ENCODE measurements at regions of chr1 and their contacts with region 1.

Region 1: GRCh38 chr1:56525489-56526041 is 53.8 kb downstream of the PLPP3 start:
- DNase-seq: peak; percentile 91 to 97 (median 94)
- H3K4me3 ChIP-seq: no peak overlapping the region
- H3K4me3 Mint-ChIP-seq: peak overlapping the region in 1 of 2 donors; percentile 48
- H3K27ac ChIP-seq: peak overlapping the region in 1 of 2 donors; percentile 26
- H3K27ac Mint-ChIP-seq: peak overlapping the region; percentile 72 to 93 (median 80)
- H3K4me1 ChIP-seq: peaks cover 21 to 32% of the 10 kb centered on the region in 2 donors
- H3K4me1 Mint-ChIP-seq: peaks cover 41% of the 10 kb centered on the region
- H3K27me3 ChIP-seq: peaks cover 76 to 84% of the 10 kb centered on the region in 2 donors
- H3K27me3 Mint-ChIP-seq: peaks cover 32 to 59% (median 34%) of the 10 kb centered on the region in 3 donors
- CTCF ChIP-seq: no peak

Region 2: DNA sequence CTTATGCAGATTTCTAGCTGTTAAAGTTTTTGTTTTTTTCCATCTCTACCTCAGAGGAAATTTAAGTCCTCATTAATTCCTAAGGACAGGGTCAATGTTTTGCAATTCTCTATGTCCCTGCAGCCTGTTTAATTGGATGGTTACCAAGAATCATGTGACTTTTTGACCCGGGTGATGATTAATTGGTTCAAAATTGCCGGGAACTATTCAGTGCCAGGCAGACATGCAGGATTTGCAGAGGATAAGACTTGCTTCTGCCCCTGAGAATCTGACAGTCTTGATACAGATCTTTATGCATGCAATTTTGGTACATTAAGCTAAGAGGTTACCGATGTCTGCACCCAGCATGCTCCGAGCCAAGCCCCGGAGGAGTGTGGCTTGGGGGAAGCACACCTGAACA is 34.1 kb before region 1 on chr1:
- intact Hi-C with region 1: loop called in 1 of 2 experiments (anchors 5 kb)
- DNase-seq: no peak
- H3K4me3 ChIP-seq: no peak overlapping the region
- H3K4me3 Mint-ChIP-seq: no peak overlapping the region
- H3K27ac ChIP-seq: no peak overlapping the region
- H3K27ac Mint-ChIP-seq: no peak overlapping the region
- H3K4me1 ChIP-seq: peaks cover 13 to 14% of the 10 kb centered on the region in 2 donors
- H3K4me1 Mint-ChIP-seq: peaks cover 14% of the 10 kb centered on the region
- H3K27me3 ChIP-seq: no peaks in the 10 kb centered on the region
- H3K27me3 Mint-ChIP-seq: peaks cover 2 to 3% (median 2%) of the 10 kb centered on the region in 3 donors
- CTCF ChIP-seq: no peak

Region 3: GRCh38 chr1:56578963-56579875 is 53.7 kb after region 1 on chr1 and contains the start of gene PLPP3:
- intact Hi-C with region 1: no loop called
- DNase-seq: peak; percentile 36 to 50 (median 38)
- H3K4me3 ChIP-seq: peak within 1 kb of the TSS; percentile 50 to 90 (median 83)
- H3K4me3 Mint-ChIP-seq: peak within 1 kb of the TSS; percentile 92 to 96
- H3K27ac ChIP-seq: no peak within 1 kb of the TSS
- H3K27ac Mint-ChIP-seq: peak within 1 kb of the TSS in 3 of 7 donors; percentile 20 to 82 (median 54)
- H3K4me1 ChIP-seq: peaks cover 6 to 23% of the 10 kb centered on the region in 2 donors
- H3K4me1 Mint-ChIP-seq: peaks cover 33% of the 10 kb centered on the region
- H3K27me3 ChIP-seq: peaks cover 15 to 30% of the 10 kb centered on the region in 2 donors
- H3K27me3 Mint-ChIP-seq: peaks cover 26 to 37% (median 29%) of the 10 kb centered on the region in 3 donors
- CTCF ChIP-seq: peak; percentile 44
- polyA plus RNA-seq, gene PLPP3: 0.21 to 0.32 TPM in 2 of 3 donors, not detected in the other